ENCODE measurements at regions of chr7 and their contacts with region 1.

Region 1: DNA sequence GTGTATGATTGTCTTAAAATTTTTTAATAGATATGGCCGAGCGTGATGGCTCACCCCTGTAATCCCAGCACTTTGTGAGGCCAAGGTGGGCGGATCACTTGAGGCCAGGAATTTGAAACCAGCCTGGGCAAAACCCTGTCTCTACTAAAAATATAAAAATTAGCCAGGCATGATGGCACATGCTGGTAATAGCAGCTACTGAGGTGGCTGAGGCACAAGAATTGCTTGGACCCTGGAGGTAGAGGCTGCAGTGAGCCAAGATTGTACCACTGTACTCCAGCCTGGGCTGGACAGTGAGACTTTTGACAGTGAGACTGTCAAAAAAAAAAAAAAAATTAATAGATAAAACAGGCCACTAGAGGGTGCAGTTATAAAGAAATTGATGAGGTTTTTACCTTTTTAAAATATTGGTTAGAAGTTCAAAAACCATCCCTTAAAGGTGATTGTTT is 20.5 kb downstream of the NOM1 start:
- DNase-seq: no peak
- H3K4me3 ChIP-seq: no peak overlapping the region
- H3K27ac ChIP-seq: no peak overlapping the region
- H3K27me3 ChIP-seq: no peaks in the 10 kb centered on the region
- CTCF ChIP-seq: peak; percentile 33; the same call in 1 of the 2 replicates

Region 2: DNA sequence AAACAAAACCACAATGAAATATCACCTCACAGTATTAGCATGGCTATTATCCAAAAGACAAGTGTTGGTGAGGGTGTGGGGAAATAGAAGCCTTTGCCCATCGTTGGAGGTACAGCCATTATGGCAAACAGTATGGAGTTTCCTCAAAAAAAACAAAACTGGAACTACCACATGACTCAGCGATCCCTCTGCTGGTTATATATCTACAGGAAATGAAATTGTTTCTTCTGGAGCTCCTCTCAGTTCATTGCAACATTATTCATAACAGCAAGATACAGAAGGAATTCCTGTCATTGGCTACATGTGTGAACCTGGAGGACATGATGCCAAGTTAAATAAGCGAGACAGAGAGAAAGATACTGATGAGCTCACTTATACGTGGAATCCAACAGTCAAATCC is 166.4 kb after region 1 on chr7:
- CTCF ChIA-PET with region 1: interaction called, 15 read pairs
- POLR2A ChIA-PET with region 1: no interaction called
- DNase-seq: peak; percentile 43
- H3K4me3 ChIP-seq: 0 out of 2 replicates have a peak overlapping the region, but pooled peaks have one; percentile 15
- H3K27ac ChIP-seq: peak overlapping the region; percentile 65
- H3K27me3 ChIP-seq: peaks cover 3% of the 10 kb centered on the region
- CTCF ChIP-seq: peak; percentile 34; the same call in 1 of the 2 replicates

Region 3: GRCh38 chr7:157228864-157229422 is 258.9 kb after region 1 on chr7:
- CTCF ChIA-PET with region 1: interaction called, 25 read pairs
- POLR2A ChIA-PET with region 1: no interaction called
- DNase-seq: no peak
- H3K4me3 ChIP-seq: no peak overlapping the region
- H3K27ac ChIP-seq: no peak overlapping the region
- H3K27me3 ChIP-seq: no peaks in the 10 kb centered on the region
- CTCF ChIP-seq: peak; percentile 59

Measured in AG04450 (cell line).